Activated B cell treated with CpG ODN at 0.5 μM for 24 hours (primary cell): ENCODE measurements at regions of chr9 and their contacts with region 1.

Region 1: DNA sequence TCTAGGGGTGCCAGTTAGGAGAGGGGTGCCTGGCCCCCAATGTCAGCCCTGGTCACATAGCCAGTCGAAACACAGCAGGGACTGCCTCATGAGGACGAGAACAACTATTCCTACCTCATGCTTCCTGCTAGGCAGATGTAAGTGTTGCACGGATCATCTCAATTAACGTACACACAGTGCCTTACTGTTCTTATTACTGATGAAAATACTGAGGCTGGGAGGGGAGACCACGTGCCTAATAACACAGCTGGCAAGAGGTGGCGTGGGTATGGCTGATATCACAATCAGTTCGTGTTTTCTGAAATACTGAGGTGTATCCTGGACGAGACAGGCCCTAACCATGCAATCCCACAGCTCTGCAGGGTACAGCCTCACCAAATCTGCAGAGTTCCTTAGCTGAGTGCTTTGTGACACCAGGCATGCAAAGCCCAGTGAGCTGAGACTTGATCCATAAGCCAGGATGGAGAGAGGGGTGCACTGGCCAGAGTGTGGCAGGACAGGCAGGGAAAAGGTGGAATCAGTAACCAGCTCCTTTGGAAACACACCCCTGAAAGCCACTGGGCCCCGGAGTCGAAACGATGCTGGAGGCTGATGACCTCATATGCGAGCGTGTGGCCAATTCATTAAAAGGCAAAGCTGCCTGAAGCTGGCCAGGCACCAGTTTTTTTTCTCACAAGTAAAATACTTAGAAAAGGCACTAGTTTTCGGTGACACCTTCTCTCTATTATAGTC is 63.9 kb downstream of the PRRT1B start:
- DNase-seq: no peak
- ATAC-seq: no peak
- H3K4me3 Mint-ChIP-seq: no peak overlapping the region
- H3K27ac Mint-ChIP-seq: no peak overlapping the region
- H3K4me1 Mint-ChIP-seq: peaks cover 12% of the 10 kb centered on the region
- H3K27me3 Mint-ChIP-seq: no peaks in the 10 kb centered on the region
- CTCF ChIP-seq: no peak

Region 2: GRCh38 chr9:131635285-131635684 is 26.0 kb after region 1 on chr9:
- CTCF ChIA-PET with region 1: no interaction called
- POLR2A ChIA-PET with region 1: interaction called, 16 read pairs
- intact Hi-C with region 1: no loop called
- DNase-seq: peak; percentile 29
- ATAC-seq: peak; percentile 77
- H3K4me3 Mint-ChIP-seq: peak overlapping the region; percentile 28
- H3K27ac Mint-ChIP-seq: peak overlapping the region; percentile 74
- H3K4me1 Mint-ChIP-seq: peaks cover 58% of the 10 kb centered on the region
- H3K27me3 Mint-ChIP-seq: no peaks in the 10 kb centered on the region
- CTCF ChIP-seq: no peak

Region 3: DNA sequence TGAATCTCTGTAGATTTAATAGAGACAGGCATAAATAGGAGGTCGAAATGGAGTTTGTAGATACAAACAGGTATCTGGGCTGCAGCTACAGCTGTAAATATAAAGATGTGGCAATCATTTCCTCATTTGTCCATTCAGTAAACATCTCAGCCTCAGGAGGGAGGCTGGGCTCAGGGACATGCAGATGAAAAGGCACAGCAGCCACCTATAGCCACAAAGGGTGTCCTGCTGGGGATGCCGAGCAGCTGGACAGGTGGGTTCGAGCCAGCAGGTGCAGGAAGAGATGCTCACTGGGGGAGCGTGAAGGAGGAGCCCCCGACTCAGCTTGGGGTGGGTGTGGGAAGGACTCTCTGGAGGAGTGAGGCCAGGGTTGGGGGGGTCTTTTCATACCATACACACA is 179.1 kb after region 1 on chr9:
- CTCF ChIA-PET with region 1: no interaction called
- POLR2A ChIA-PET with region 1: no interaction called
- intact Hi-C with region 1: no loop called
- DNase-seq: no peak
- ATAC-seq: no peak
- H3K4me3 Mint-ChIP-seq: no peak overlapping the region
- H3K27ac Mint-ChIP-seq: no peak overlapping the region
- H3K4me1 Mint-ChIP-seq: no peaks in the 10 kb centered on the region
- H3K27me3 Mint-ChIP-seq: peaks cover 48% of the 10 kb centered on the region
- CTCF ChIP-seq: no peak